ENCODE measurements at regions of chr7 and their contacts with region 1.

Region 1: DNA sequence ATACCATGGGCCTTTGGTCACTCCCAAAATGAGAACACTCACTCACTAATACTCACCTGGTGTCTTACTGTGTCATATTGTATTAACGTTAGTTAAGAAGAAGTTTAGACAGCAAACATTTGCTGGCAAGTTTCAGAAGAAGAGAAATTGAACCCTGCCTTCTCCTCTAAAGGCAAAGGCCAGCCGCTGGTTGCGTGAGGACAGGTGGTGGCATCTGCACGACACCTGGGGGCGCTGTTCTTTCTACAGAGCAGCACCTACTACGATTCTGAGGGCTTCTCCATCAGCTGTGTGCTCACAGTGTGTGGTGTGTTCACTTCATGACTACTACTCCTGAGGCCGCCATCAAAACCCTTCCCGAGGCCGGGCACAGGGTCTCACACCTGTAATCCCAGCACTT is 17.9 kb upstream of the CLEC2L start:
- DNase-seq: no peak
- H3K4me3 ChIP-seq: no peak overlapping the region
- H3K27ac ChIP-seq: no peak overlapping the region
- H3K4me1 ChIP-seq: no peaks in the 10 kb centered on the region
- H3K27me3 ChIP-seq: peaks cover 0 to 10% (median 0%) of the 10 kb centered on the region in 4 donors
- CTCF ChIP-seq: no peak
- EP300 ChIP-seq: no peak
- POLR2A ChIP-seq: no peak

Region 2: GRCh38 chr7:139457153-139457940 is 48.2 kb before region 1 on chr7:
- intact Hi-C with region 1: no loop called
- DNase-seq: no peak
- H3K4me3 ChIP-seq: no peak overlapping the region
- H3K27ac ChIP-seq: no peak overlapping the region
- H3K4me1 ChIP-seq: no peaks in the 10 kb centered on the region
- H3K27me3 ChIP-seq: peaks cover 0 to 5% (median 0%) of the 10 kb centered on the region in 4 donors
- CTCF ChIP-seq: no peak
- EP300 ChIP-seq: no peak
- POLR2A ChIP-seq: no peak

Region 3: GRCh38 chr7:139523199-139523941 is 17.8 kb after region 1 on chr7 and contains the start of gene CLEC2L:
- intact Hi-C with region 1: no loop called
- DNase-seq: no peak
- H3K4me3 ChIP-seq: peak within 1 kb of the TSS; percentile 35 to 50 (median 38)
- H3K27ac ChIP-seq: no peak within 1 kb of the TSS
- H3K4me1 ChIP-seq: peaks cover 0 to 23% (median 14%) of the 10 kb centered on the region in 4 donors
- H3K27me3 ChIP-seq: peaks cover 0 to 53% (median 6%) of the 10 kb centered on the region in 4 donors
- CTCF ChIP-seq: no peak
- EP300 ChIP-seq: no peak
- POLR2A ChIP-seq: no peak
- total RNA-seq, gene CLEC2L: not detected

Region 4: GRCh38 chr7:139557857-139558581 is 52.5 kb after region 1 on chr7:
- intact Hi-C with region 1: no loop called
- DNase-seq: no peak
- H3K4me3 ChIP-seq: no peak overlapping the region
- H3K27ac ChIP-seq: no peak overlapping the region
- H3K4me1 ChIP-seq: no peaks in the 10 kb centered on the region
- H3K27me3 ChIP-seq: peaks cover 0 to 20% (median 0%) of the 10 kb centered on the region in 4 donors
- CTCF ChIP-seq: no peak
- EP300 ChIP-seq: no peak
- POLR2A ChIP-seq: no peak

Region 5: GRCh38 chr7:139570119-139570518 is 64.6 kb after region 1 on chr7:
- intact Hi-C with region 1: loop called (anchors 5 kb)
- DNase-seq: no peak
- H3K4me3 ChIP-seq: no peak overlapping the region
- H3K27ac ChIP-seq: no peak overlapping the region
- H3K4me1 ChIP-seq: peaks cover 0 to 10% (median 1%) of the 10 kb centered on the region in 4 donors
- H3K27me3 ChIP-seq: no peaks in the 10 kb centered on the region
- CTCF ChIP-seq: peak; percentile 7 to 18 (median 12)
- EP300 ChIP-seq: no peak
- POLR2A ChIP-seq: no peak

Region 6: DNA sequence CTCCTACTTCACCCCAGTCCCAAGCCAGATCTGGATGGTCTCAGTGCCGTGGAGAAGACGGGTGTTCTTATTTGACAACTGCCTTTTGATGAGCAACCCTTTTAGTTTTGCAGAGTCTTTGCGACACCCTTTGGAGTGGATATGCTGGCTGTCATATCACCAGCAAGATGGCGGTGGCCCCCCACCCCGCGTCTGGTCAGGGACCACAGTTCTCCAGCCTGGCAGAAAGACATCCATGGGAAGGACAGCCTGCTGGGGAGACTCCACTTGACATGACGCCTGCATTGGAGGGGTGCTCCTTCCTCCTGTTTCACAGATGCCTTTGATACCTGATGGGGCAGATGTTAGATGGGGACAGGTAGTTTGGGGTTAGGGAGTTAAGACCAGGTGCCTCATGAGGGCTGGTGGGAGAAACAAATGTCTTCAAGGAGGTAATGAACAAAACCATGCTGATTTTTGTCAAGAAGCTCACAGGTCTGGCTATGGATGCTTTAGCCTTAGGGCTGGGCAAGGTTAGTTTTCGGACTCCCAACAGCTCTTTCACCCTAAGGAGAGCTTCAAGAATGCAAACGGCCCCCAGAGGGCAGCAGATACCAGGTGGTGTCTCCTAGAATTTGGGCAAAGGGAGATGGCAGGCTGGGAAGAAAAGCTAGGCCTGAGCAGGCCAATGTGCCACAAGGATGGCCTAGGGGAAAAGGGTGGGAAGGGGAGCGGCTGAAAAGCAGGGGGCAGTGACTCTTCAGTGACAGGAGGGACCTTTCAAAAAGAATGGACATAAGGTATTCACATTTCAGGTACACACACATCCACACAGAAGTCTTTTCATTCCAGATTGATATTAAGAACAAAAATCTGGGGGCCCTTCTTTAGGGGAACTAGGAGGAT is 113.2 kb after region 1 on chr7:
- intact Hi-C with region 1: loop called (anchors 10 kb)
- DNase-seq: no peak
- H3K4me3 ChIP-seq: no peak overlapping the region
- H3K27ac ChIP-seq: no peak overlapping the region
- H3K4me1 ChIP-seq: no peaks in the 10 kb centered on the region
- H3K27me3 ChIP-seq: no peaks in the 10 kb centered on the region
- CTCF ChIP-seq: peak; percentile 27 to 44 (median 34)
- EP300 ChIP-seq: no peak
- POLR2A ChIP-seq: no peak

Measured in esophagus muscularis mucosa (tissue), 4 donors.